Aorta (tissue), 5 donors: ENCODE measurements at regions of chr1 and their contacts with region 1.

Region 1: DNA sequence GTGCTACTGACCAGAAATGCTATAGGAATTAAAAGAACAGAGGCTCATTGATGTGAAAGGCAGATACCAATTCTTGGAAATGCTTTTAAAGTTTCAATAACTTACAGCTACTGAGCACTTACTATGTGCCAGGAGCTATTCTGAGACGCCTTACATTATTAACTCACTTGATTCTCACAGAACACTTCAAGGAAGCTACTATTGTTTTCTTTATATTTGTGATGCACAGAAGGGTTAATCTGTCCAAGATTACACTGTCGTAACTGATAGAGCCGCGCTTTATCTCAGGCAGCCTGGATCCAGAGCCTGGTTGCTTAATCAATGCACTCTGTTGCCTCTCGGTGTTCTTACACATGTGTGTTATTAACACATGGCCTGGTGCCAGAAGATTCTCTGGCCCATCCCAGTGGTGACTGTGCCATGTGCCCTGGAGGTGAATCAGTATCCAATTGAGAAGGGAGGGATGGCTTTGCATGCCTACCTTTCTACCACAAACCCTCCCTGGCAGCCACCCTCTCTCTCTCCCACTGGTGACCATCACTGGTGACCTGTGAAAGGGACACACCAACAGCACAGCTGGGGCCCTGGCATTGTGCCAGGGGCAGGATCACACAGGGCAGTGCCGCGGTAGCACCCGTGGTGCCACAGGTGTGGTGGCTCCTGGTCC is 8.8 kb downstream of the FMO1 start:
- DNase-seq: no peak
- ATAC-seq: peak; percentile 17
- H3K4me3 ChIP-seq: no peak overlapping the region
- H3K27ac ChIP-seq: no peak overlapping the region
- H3K4me1 ChIP-seq: no peaks in the 10 kb centered on the region
- H3K27me3 ChIP-seq: no peaks in the 10 kb centered on the region

Region 2: GRCh38 chr1:171038284-171038683 is 218.8 kb before region 1 on chr1:
- intact Hi-C with region 1: no loop called
- DNase-seq: no peak
- ATAC-seq: no peak
- H3K4me3 ChIP-seq: no peak overlapping the region
- H3K27ac ChIP-seq: no peak overlapping the region
- H3K4me1 ChIP-seq: no peaks in the 10 kb centered on the region
- H3K27me3 ChIP-seq: no peaks in the 10 kb centered on the region

Region 3: DNA sequence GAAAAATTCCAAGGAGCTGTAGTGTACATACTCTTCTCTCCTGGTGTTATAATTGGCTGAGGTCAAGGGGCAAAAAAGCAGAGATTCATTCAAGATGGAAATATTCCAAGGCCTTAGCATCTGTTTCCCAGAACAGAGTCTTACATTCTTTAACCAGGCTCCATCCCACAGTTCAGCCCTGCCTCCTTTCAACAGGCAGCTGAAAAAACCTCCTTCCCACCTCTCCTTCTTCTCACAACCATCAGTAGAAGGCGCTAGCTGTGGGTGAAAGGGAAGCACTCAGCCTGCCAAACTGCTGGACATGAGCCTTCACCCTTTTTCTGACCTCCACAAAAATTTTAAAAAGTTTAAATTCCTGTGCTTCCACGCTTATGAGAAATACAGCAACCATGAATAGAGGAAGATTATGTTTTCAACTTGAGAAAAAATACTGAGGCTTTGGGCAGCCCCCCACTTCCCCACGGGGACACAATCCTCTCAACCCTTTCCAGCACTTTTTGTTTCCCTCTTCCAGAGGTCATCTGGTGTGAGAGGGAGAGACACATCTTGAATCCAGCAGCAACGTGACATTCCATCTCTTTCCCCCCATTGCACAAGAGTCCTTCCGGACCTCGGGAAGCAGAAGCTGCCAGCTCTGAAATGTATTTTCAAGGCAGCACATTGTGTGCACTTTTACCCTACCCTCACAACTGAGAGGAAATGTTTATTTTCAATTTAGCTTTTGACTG is 115.2 kb before region 1 on chr1:
- intact Hi-C with region 1: no loop called
- DNase-seq: peak in 1 of 2 donors; percentile 78
- ATAC-seq: peak; percentile 90
- H3K4me3 ChIP-seq: no peak overlapping the region
- H3K27ac ChIP-seq: peak overlapping the region; percentile 90 to 95
- H3K4me1 ChIP-seq: peaks cover 3% of the 10 kb centered on the region in 2 donors
- H3K27me3 ChIP-seq: no peaks in the 10 kb centered on the region

Region 4: GRCh38 chr1:171188388-171189266 is 68.4 kb before region 1 on chr1:
- intact Hi-C with region 1: no loop called
- DNase-seq: no peak
- ATAC-seq: peak; percentile 64
- H3K4me3 ChIP-seq: peak overlapping the region; percentile 42 to 94
- H3K27ac ChIP-seq: no peak overlapping the region
- H3K4me1 ChIP-seq: peaks cover 2 to 4% of the 10 kb centered on the region in 2 donors
- H3K27me3 ChIP-seq: no peaks in the 10 kb centered on the region

Region 5: DNA sequence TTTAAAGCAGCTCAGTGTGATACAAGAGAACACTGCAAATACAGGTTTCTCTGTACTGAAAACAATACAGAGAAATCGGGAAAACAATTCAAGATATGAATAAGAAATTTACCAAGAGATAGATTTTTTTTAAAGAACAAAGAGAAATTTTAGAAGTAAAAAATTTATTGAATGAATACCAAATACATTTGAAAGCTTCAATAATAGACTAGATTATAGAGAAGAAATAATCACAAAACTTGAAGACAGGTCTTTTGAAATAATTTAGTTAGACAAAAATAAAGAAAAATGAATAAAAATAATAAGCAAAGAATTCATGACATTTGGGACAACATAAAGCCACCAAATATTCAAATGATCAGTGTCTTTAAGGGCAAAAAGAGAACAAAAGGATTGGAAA is 43.3 kb after region 1 on chr1:
- intact Hi-C with region 1: loop called in 1 of 2 experiments (anchors 2 kb)
- DNase-seq: no peak
- ATAC-seq: no peak
- H3K4me3 ChIP-seq: no peak overlapping the region
- H3K27ac ChIP-seq: no peak overlapping the region
- H3K4me1 ChIP-seq: no peaks in the 10 kb centered on the region
- H3K27me3 ChIP-seq: peaks cover 0 to 1% of the 10 kb centered on the region in 2 donors

Region 6: DNA sequence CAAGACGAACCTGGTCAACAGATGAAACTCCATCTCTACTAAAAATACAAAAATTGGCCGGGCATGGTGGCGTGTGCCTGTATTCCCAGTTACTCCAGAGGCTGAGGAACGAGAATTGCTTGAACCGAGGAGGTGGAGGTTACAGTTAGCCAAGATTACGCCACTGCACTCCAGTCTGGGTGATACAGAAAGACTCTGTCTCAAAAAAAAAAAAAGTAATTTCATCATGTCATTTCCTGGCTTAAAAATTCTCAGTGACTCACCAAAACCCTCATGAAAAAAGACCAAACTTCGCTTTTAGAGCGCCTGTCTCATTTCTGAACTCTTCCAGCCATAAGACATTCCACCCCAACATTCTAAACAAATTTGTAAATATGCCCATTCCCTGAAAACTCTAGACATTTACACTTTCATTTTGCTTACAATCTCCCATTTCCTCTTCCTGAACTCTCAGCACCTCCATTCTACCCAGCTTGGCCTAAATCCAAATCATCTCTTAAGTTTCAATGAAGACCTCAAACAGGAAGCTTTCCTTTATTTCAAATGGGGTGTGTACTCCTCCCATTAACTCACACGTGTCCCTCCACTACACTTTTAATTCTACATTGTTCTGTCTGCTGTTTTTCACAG is 177.8 kb after region 1 on chr1:
- intact Hi-C with region 1: no loop called
- DNase-seq: peak in 1 of 2 donors; percentile 49
- ATAC-seq: peak; percentile 71
- H3K4me3 ChIP-seq: no peak overlapping the region
- H3K27ac ChIP-seq: peak overlapping the region in 1 of 2 donors; percentile 6
- H3K4me1 ChIP-seq: peaks cover 0 to 6% of the 10 kb centered on the region in 2 donors
- H3K27me3 ChIP-seq: no peaks in the 10 kb centered on the region